ENCODE measurements at regions of chr11 and their contacts with region 1.

Region 1: GRCh38 chr11:120108154-120108865 is 29.6 kb downstream of the TRIM29 start:
- DNase-seq: peak; percentile 77
- H3K4me3 ChIP-seq: no peak overlapping the region
- H3K27ac ChIP-seq: no peak overlapping the region
- H3K4me1 ChIP-seq: no peaks in the 10 kb centered on the region
- H3K27me3 ChIP-seq: no peaks in the 10 kb centered on the region
- CTCF ChIP-seq: peak; percentile 99

Region 2: DNA sequence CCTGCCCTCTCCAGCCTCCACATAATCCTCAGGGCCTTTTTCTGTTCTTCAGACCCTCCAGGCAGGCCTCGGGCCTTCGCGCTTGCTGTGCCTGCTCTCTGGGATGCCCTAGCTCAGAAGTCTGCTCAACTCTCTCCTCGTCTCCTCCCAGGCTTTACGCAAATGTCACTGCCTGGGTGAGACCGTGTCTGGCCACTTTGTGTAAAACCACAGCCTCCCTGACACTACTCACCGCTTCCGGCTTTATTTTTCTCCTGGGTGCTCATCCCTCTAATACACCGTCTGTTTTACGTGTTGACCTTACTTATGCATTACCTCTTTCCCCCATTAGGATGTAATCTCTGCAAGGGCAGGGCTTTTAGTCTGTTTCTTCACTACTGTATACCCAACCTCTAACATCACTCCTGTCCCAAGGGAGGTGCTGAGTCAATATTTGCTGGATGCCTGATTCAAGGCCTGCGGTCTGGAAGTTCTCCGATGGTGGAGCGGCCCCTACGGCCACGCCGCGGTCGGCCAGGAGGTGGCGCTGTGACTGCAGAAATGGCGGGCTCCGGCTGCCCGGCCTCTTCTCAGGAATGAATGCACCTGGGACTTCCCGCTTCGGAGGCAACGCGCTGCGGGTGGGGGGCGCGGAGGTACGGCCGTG is 627.2 kb before region 1 on chr11:
- intact Hi-C with region 1: loop called (anchors 5 kb)
- DNase-seq: peak; percentile 86
- H3K4me3 ChIP-seq: no peak overlapping the region
- H3K27ac ChIP-seq: no peak overlapping the region
- H3K4me1 ChIP-seq: no peaks in the 10 kb centered on the region
- H3K27me3 ChIP-seq: no peaks in the 10 kb centered on the region
- CTCF ChIP-seq: peak; percentile 97

Region 3: GRCh38 chr11:119641983-119642745 is 466.1 kb before region 1 on chr11:
- intact Hi-C with region 1: loop called (anchors 5 kb)
- DNase-seq: no peak
- H3K4me3 ChIP-seq: no peak overlapping the region
- H3K27ac ChIP-seq: no peak overlapping the region
- H3K4me1 ChIP-seq: no peaks in the 10 kb centered on the region
- H3K27me3 ChIP-seq: no peaks in the 10 kb centered on the region
- CTCF ChIP-seq: no peak

Region 4: GRCh38 chr11:119666463-119667131 is 441.7 kb before region 1 on chr11:
- intact Hi-C with region 1: loop called (anchors 5 kb)
- DNase-seq: peak; percentile 81
- H3K4me3 ChIP-seq: no peak overlapping the region
- H3K27ac ChIP-seq: no peak overlapping the region
- H3K4me1 ChIP-seq: no peaks in the 10 kb centered on the region
- H3K27me3 ChIP-seq: no peaks in the 10 kb centered on the region
- CTCF ChIP-seq: peak; percentile 90

Region 5: DNA sequence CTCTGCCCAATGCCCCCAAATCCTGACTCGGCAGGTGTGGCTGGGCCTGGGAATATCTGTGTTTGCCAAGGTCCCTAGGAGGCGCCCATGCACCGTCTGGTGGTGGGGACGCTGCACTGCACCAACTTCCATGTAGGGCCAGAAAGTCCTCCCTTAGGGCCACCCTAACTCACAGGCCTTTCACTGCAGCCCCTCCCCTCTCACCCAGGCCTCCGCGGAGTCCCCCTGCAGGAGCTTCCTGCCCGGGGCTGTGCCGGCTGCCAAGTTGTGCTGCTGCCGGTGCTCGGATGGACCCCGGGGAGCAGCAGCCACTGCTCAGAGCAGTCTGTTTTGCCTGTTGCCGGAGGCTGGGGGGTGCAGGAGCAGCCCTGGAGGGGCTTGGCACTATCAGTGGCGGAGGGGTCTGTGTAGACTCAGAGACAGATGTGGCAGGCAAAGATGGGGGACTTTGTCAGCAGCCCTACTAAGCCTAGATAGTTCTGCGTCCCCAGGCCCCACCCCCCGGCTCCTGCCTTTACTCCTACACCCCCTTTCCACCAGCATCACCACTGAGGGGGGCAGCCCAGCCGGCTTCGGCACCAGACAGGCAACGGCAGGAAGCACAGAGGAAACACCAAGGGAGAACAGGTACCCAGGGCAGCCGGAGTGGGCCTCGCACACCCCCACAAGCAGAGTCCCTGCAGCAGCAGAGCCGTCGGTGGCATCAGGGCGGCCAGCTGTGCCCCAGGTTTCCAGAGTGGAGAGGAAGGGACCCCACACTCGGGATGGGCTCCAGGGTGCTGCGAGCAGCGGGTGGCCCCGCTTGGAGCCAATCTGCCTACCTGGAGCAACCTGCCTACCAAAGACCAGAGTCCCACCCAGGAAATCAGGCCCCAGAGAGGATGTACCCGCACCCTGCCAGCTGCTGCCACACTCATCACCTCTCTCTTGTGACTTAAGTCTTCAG is 94.7 kb before region 1 on chr11:
- intact Hi-C with region 1: loop called (anchors 10 kb)
- DNase-seq: peak; percentile 63
- H3K4me3 ChIP-seq: no peak overlapping the region
- H3K27ac ChIP-seq: no peak overlapping the region
- H3K4me1 ChIP-seq: no peaks in the 10 kb centered on the region
- H3K27me3 ChIP-seq: no peaks in the 10 kb centered on the region
- CTCF ChIP-seq: peak; percentile 66

Region 6: DNA sequence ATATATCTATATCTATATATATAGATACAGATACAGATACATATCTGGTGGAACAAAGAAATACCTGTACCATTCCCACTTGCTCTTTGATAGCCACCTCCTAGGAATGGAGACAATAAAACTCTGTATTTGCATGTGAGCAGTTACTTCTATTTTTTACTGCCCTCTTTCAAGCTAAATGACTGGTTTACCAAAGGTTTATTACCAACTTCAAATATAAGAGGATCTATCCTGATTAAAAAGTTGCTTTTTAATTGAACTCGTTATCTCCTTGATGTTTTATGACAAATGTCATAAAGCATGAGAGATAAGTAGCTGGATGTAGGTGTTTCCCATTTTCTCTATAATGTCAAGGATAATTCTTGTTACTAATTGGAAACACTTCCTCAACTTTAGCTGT is 381.5 kb after region 1 on chr11:
- intact Hi-C with region 1: no loop called
- DNase-seq: no peak
- H3K4me3 ChIP-seq: no peak overlapping the region
- H3K27ac ChIP-seq: no peak overlapping the region
- H3K4me1 ChIP-seq: no peaks in the 10 kb centered on the region
- H3K27me3 ChIP-seq: no peaks in the 10 kb centered on the region
- CTCF ChIP-seq: no peak